HEK293T (cell line): ENCODE measurements at regions of chr20 and their contacts with region 1.

Region 1: DNA sequence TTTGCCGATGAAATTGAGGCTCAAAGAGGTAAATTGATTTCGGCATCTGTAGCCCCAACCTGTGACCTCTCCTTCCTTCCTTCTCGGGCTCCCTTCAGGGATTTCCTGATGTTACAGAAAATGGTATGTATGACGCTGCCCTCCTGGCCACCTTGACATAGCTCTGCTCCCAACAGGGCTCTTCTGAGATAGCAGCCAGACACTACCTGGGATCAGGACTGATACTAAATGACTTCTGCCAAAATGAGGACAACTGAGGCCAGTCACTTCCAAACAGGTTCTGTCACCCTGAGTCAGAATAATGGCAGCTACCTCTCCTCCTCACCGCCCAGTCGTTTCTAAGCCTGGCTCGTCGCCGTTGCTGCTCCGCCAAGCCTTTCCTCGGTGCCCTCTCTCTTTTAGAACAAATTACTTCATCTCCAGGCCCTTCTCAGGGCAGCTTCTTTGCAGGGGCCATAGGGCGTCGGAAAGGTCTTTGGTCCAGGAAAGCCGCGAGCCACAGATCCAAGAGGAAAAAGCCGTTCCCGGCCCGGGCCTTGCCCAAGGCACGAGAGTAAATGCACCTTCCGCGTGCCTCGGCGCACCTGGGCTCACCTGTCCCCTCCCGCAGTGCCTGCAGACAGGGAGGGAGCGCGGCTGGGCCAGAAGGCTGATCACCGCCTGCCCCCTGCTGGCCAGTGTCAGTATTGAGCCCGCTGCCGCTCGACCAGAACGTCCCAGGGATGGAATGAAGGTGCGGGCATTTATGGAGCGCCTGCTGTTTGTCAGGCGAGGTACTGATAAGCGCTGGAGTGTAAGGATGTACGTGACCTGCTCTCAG is 904 bp upstream of the LPIN3 start:
- DNase-seq: peak; percentile 81

Region 2: GRCh38 chr20:41173161-41173721 is 166.5 kb before region 1 on chr20:
- CTCF ChIA-PET with region 1: interaction called, 23 read pairs
- POLR2A ChIA-PET with region 1: no interaction called
- DNase-seq: peak; percentile 83

Region 3: GRCh38 chr20:41279546-41280225 is 60.0 kb before region 1 on chr20:
- CTCF ChIA-PET with region 1: no interaction called
- POLR2A ChIA-PET with region 1: no interaction called
- DNase-seq: no peak

Region 4: GRCh38 chr20:41327161-41327560 is 12.6 kb before region 1 on chr20:
- CTCF ChIA-PET with region 1: interaction called, 10 read pairs
- POLR2A ChIA-PET with region 1: no interaction called
- DNase-seq: no peak

Region 5: DNA sequence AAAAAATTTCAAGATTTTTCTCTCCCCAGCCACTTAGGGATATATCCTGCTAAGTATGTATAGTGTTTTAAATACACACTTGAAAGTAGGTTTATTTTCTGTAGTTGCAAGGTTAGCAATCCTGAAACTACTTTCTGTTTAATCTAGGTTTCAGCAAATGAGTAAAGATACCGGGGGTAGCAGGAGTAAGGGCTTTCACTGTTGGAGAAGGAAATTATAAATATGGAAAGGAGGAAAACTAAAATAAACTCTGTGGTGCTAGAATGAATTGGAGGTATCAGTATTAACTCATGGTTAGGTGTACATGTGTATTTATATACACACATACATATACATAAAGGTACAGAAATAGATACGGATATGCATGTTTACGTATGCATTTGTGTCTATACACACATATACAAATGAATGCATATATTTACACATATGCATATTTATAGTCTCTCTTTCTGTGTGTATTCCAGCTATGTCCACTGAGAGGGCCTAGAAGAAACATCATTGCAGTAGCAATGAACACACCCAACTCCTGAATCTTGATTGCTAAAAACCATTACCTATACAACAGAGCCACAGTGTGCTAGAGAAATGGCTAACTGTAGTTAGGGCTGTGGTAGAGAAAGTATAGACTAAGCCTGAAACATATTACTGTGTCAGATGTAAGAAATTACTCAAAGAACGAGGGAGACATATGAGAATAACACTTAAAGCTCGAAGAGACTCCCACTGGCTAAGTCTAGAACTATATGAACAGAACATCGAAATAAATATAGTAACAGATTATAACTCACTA is 122.8 kb after region 1 on chr20:
- CTCF ChIA-PET with region 1: no interaction called
- POLR2A ChIA-PET with region 1: no interaction called
- DNase-seq: no peak